Breast epithelium (tissue), 4 donors: ENCODE measurements at regions of chr12 and their contacts with region 1.

Region 1: DNA sequence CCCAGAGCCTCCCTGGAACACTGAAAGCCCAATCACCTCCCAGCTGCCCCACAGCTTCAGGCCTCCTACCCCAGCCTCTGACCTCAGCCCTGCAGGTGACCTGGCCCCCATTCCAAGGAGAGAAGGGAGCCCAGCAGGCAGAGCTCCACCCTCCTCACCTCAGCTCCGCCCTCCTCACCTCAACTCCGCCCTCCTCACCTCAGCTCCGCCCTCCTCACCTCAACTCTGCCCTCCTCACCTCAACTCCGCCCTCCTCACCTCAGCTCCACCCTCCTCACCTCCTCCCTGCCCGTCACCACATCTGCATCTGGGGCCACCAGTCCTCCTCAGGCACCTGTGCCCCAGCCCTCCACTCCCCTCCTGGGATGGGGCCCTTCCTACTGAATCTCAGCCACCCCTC is 112.2 kb upstream of the SFSWAP start:
- DNase-seq: no peak
- H3K4me3 ChIP-seq: no peak overlapping the region
- H3K27ac ChIP-seq: no peak overlapping the region
- H3K4me1 ChIP-seq: no peaks in the 10 kb centered on the region
- H3K27me3 ChIP-seq: peaks cover 0 to 3% of the 10 kb centered on the region in 2 donors
- CTCF ChIP-seq: no peak
- POLR2A ChIP-seq: no peak

Region 2: GRCh38 chr12:131636940-131637750 is 38.4 kb after region 1 on chr12:
- intact Hi-C with region 1: loop called (anchors 2 kb)
- DNase-seq: no peak
- H3K4me3 ChIP-seq: no peak overlapping the region
- H3K27ac ChIP-seq: no peak overlapping the region
- H3K4me1 ChIP-seq: no peaks in the 10 kb centered on the region
- H3K27me3 ChIP-seq: peaks cover 0 to 33% of the 10 kb centered on the region in 2 donors
- CTCF ChIP-seq: no peak
- POLR2A ChIP-seq: no peak